CD4-positive, alpha-beta T cell (primary cell): ENCODE measurements at regions of chr4 and their contacts with region 1.

Region 1: GRCh38 chr4:173420324-173420752 is 21.4 kb upstream of the SCRG1 start:
- DNase-seq: peak in 3 of 14 experiments; percentile 38 to 43 (median 38)
- ATAC-seq: peak; percentile 57
- H3K4me3 ChIP-seq: no peak overlapping the region
- H3K4me3 Mint-ChIP-seq: no peak overlapping the region
- H3K27ac ChIP-seq: no peak overlapping the region
- H3K27ac Mint-ChIP-seq: no peak overlapping the region
- H3K4me1 ChIP-seq: peaks cover 8% of the 10 kb centered on the region
- H3K4me1 Mint-ChIP-seq: peaks cover 10% of the 10 kb centered on the region
- H3K27me3 ChIP-seq: no peaks in the 10 kb centered on the region
- H3K27me3 Mint-ChIP-seq: no peaks in the 10 kb centered on the region
- CTCF ChIP-seq: peak; percentile 61

Region 2: DNA sequence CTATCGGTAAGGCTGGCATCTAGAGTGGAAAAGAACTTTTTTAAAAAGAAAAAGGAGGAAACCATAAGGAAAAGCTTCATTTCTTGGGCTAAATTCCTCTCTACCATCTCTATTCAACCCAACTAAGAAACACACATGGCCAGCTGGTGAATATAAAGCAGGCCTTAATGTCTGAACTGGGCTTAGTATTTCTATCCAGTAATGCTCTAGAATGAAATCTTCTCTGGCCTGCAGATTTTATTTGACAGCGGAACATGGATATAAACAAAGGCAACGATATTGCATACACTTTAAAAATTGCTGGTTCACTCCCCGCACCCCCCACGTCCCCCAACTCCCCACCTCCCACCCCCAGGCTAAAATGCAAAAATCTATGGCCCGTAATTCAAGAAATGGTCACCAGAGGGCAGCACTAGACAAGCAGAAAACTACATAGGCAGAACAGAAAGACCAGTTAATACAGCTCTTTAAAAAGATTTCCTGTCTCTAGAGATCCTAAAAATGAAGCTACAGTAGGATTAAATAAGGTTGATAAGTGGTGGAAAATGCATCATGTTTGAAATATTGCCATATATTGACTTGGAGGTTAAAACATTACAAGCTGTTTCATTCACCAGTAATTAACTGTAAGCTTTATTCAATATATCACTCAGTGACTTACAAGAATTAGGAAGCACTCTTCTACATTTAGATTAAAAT is 407.0 kb before region 1 on chr4:
- CTCF ChIA-PET with region 1: interaction called, 4 read pairs
- POLR2A ChIA-PET with region 1: no interaction called
- intact Hi-C with region 1: loop called (anchors 1 kb)
- DNase-seq: peak; percentile 19 to 70 (median 42)
- ATAC-seq: peak; percentile 52
- H3K4me3 ChIP-seq: no peak overlapping the region
- H3K4me3 Mint-ChIP-seq: no peak overlapping the region
- H3K27ac ChIP-seq: no peak overlapping the region
- H3K27ac Mint-ChIP-seq: no peak overlapping the region
- H3K4me1 ChIP-seq: no peaks in the 10 kb centered on the region
- H3K4me1 Mint-ChIP-seq: no peaks in the 10 kb centered on the region
- H3K27me3 ChIP-seq: no peaks in the 10 kb centered on the region
- H3K27me3 Mint-ChIP-seq: no peaks in the 10 kb centered on the region
- CTCF ChIP-seq: peak; percentile 81

Region 3: GRCh38 chr4:173318648-173319211 is 101.6 kb before region 1 on chr4:
- CTCF ChIA-PET with region 1: interaction called, 12 read pairs
- POLR2A ChIA-PET with region 1: no interaction called
- intact Hi-C with region 1: loop called (anchors 1 kb)
- DNase-seq: peak in 3 of 14 experiments; percentile 57 to 66 (median 59)
- ATAC-seq: peak; percentile 37
- H3K4me3 ChIP-seq: no peak overlapping the region
- H3K4me3 Mint-ChIP-seq: no peak overlapping the region
- H3K27ac ChIP-seq: no peak overlapping the region
- H3K27ac Mint-ChIP-seq: no peak overlapping the region
- H3K4me1 ChIP-seq: no peaks in the 10 kb centered on the region
- H3K4me1 Mint-ChIP-seq: no peaks in the 10 kb centered on the region
- H3K27me3 ChIP-seq: no peaks in the 10 kb centered on the region
- H3K27me3 Mint-ChIP-seq: no peaks in the 10 kb centered on the region
- CTCF ChIP-seq: peak; percentile 81

Region 4: DNA sequence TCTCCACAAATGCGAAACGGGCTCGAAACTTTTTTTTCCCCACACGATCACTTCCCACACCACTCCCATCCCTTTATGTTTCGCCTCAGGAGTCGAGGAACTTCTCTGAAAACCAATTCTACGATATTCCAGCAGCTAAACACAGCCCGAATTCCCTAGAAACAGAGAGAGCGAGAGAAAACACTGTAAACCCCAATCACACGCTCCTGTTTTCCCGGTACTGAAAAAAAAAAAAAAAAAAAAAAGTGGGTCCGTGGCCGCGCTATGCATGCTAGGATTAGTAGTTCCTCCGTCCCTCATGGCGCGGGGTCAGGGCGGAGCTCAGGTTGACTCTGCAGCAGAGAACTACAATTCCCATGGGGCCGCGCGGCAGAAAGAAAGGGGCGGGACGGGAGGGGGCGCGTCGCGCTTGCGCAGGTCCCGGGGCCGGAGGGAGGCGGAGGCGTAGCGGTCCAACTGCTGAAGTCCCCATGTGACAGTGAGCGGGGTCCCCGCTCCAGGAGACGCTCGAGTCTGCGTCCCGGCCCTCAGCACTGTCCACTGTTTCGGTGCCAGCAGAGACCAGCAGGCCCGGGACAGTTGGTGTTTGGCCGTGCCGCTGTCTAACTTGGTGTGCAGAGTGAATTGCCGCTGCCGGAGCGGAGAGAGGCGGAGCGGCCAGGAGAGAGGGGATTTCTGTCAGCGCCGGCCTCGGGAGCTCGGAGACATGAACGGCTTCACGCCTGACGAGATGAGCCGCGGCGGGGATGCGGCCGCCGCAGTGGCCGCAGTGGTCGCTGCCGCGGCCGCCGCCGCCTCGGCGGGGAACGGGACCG is 49.7 kb before region 1 on chr4 and contains the start of gene SAP30:
- CTCF ChIA-PET with region 1: interaction called, 7 read pairs
- POLR2A ChIA-PET with region 1: no interaction called
- intact Hi-C with region 1: loop called in 1 of 2 experiments (anchors 5 kb)
- DNase-seq: peak; percentile 94 to 98 (median 98)
- ATAC-seq: peak; percentile 86
- H3K4me3 ChIP-seq: peak within 1 kb of the TSS; percentile 96
- H3K4me3 Mint-ChIP-seq: peak within 1 kb of the TSS; percentile 98
- H3K27ac ChIP-seq: peak within 1 kb of the TSS; percentile 58 to 88
- H3K27ac Mint-ChIP-seq: peak within 1 kb of the TSS; percentile 87
- H3K4me1 ChIP-seq: peaks cover 27% of the 10 kb centered on the region
- H3K4me1 Mint-ChIP-seq: peaks cover 37% of the 10 kb centered on the region
- H3K27me3 ChIP-seq: no peaks in the 10 kb centered on the region
- H3K27me3 Mint-ChIP-seq: peaks cover 27% of the 10 kb centered on the region
- CTCF ChIP-seq: no peak
- total RNA-seq, gene SAP30: 2.5 to 3.9 TPM

Region 5: DNA sequence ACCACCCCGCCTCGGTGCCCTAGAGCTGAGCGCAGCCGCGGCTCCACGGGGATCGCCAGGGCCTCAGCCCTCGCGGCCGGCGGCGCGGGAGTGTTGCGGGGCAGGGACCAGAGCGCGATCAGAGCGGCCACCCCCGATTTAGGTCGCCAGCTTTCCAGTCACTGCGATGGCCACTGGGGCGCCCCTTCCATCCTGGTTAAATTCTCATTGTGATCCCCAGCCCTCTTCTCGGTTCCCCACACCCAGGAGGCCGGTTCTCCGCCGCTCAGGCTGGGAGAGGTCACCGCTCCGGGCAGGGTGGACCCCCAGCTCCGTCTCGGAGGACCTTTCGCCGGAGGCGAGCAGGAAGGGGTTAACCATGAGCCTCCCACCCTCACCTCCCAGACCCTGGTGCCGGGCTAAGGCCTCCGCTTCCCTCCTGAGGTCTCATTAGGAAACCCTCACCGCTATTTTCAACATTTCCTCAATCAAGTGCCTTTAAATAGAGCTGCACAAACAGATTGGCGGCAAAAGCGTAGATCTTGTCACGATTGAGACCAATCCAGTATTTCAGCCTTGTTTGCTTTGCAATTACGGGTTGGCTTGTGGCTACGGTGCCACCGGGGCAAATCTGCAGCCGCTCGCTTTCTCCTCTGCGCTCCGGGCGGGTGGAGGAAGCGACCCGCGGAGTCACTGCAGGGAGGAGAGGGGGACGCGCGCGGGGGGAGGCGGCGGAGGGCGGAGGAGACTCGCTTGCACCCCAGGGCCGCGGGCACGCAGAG is 118.0 kb after region 1 on chr4:
- CTCF ChIA-PET with region 1: no interaction called
- POLR2A ChIA-PET with region 1: no interaction called
- intact Hi-C with region 1: no loop called
- DNase-seq: no peak
- ATAC-seq: peak; percentile 29
- H3K4me3 ChIP-seq: peak overlapping the region; percentile 35
- H3K4me3 Mint-ChIP-seq: peak overlapping the region; percentile 59
- H3K27ac ChIP-seq: no peak overlapping the region
- H3K27ac Mint-ChIP-seq: no peak overlapping the region
- H3K4me1 ChIP-seq: peaks cover 17% of the 10 kb centered on the region
- H3K4me1 Mint-ChIP-seq: peaks cover 14% of the 10 kb centered on the region
- H3K27me3 ChIP-seq: peaks cover 58 to 91% of the 10 kb centered on the region in 2 experiments
- H3K27me3 Mint-ChIP-seq: peaks cover 93% of the 10 kb centered on the region
- CTCF ChIP-seq: no peak

Region 6: DNA sequence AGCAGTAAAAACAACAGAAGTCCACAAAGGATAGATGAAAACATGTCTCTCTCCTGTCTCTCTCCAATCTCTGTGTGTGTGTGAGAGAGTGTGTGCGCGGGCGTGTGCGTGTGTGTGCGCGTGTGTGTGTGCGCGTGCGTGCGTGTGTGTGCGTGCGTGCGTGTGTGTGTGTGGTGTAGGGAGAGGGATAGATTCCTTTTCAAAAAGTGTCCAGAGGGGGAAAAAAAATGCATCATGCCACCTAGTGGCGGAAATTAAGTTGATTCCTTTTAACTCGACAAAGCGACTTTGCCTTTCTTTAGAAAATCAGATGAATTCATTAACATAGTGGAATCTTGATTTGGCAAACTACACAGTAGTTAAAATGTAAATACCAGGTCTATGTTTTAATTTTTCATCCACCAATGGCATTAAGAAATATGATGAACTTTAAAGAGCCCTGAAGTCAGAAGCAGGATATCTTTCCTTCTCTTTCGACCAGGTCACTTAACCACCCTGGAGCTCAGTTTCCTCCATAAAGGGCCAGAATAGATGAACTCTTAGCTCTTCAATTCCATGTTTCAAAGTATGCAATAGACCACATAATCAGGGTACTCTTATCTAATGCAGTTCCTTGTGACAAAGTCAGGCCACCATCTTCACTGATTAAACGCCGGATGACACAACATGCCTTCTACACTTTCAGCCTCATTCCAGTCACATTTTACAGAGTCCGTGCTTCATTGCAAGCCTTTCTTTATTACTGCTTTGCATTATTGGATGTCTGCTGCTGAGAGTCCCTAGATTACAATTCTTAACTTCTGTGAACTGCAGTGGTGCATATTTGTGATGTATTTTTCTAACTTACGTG is 700.3 kb after region 1 on chr4:
- CTCF ChIA-PET with region 1: no interaction called
- POLR2A ChIA-PET with region 1: no interaction called
- intact Hi-C with region 1: loop called in 1 of 2 experiments (anchors 10 kb)
- DNase-seq: peak in 4 of 14 experiments; percentile 15 to 43 (median 35)
- ATAC-seq: no peak
- H3K4me3 ChIP-seq: no peak overlapping the region
- H3K4me3 Mint-ChIP-seq: no peak overlapping the region
- H3K27ac ChIP-seq: no peak overlapping the region
- H3K27ac Mint-ChIP-seq: no peak overlapping the region
- H3K4me1 ChIP-seq: peaks cover 3% of the 10 kb centered on the region
- H3K4me1 Mint-ChIP-seq: peaks cover 11% of the 10 kb centered on the region
- H3K27me3 ChIP-seq: peaks cover 4 to 24% of the 10 kb centered on the region in 2 experiments
- H3K27me3 Mint-ChIP-seq: peaks cover 66% of the 10 kb centered on the region
- CTCF ChIP-seq: no peak